Posterior vena cava (tissue), 2 donors: ENCODE measurements at regions of chr4 and their contacts with region 1.

Region 1: GRCh38 chr4:179871718-179872117 is 2371.5 kb upstream of the TENM3 start:
- DNase-seq: no peak

Region 2: DNA sequence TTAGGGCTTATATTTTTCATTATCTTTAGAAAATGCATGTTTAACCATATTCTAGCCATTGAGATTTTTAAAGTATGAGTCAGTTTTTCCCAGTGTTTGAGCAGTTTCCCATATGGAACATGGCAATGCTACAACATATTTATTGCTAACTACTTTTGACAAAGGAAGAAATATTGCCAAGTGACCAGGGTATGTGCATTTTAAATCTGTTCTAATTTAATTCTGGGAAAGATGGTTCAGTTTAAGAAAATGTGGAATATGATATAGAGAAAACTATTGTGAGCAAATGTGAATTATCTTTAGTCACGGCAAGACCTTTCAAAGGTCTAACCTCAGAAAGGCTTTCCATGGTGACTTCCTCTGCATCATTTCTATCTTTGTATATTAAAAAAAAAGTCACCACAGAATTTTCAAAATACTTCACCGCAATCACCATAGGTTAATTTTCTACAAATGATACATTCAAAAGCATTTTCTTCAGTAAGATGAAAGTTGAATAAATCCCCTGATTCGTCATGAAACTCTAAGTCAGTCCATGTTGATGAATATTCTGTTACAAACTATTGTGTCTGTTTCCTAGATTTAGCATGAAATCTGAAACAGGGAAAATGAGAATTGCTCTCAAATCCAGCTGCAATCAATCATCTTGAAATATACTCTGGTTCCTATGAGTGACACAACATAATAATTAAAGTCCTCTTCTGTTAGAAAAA is 22.5 kb after region 1 on chr4:
- intact Hi-C with region 1: loop called in 1 of 2 experiments (anchors 1 kb)
- DNase-seq: no peak

Region 3: GRCh38 chr4:180625653-180626052 is 753.9 kb after region 1 on chr4:
- intact Hi-C with region 1: no loop called
- DNase-seq: no peak

Region 4: DNA sequence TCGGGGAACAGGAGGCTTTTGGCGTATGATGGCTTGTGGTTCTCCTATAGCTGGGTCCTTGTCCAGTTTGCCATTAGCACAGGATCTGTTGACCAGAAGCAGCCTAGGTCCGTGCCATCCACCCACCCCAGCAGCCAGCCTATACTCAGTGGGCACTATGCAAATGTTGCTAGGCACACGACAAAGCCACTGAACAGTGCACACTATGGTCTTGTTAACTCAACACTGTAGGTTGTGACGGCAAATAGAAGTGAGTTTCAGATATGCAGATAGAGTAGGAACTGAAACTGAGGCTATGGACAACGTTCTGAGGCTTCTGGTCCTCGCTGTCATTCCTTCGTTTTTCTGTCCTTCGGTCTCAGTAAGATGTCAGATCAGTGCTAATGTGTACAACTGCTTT is 1830.2 kb after region 1 on chr4:
- intact Hi-C with region 1: no loop called
- DNase-seq: no peak